Activated B cell treated with CpG ODN at 0.5 μM for 24 hours (primary cell): ENCODE measurements at regions of chr12 and their contacts with region 1.

Region 1: DNA sequence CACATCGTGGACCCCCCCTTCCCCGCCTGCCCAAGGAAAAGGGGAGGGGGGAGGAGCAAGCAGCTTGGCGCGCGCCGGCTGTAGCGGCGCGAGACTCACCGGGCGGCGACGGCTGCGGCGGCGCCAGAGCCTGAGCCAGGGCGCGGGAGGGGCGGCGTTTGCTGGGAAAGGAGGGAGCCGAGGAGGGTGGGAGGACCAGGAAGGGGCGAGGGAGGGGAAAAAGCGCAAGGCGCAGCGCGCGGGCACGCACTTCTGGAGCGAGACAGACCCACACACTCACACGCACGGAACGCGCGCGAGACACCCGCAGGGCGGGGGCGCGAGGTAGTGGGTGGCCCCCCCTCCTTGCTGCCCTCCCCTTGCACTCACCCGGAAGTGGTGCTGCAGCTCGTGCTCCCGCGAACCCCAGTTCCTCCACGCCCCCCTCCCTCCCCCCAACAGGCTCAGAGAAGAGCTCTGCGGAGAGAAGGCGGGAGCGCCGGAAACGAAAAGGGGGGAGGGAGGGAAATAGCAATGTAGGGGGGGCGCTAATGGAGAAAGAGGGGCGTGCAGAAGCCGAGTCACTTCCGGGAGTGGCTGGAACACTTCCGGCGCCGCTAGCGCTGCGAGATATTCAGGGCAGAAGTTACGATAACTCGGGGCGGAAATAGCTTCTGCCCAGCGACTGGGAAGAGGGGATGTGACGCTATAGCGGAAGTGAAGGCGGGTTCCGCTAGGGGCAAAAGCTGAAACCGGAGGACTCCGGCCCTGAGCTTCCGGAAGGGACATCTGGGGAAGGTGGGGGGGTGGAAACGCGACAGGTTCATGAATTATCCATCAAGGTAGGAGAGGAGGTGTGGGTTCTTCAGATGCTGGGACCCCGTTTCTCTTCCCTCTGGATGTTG is at the start of gene ZNF384:
- DNase-seq: peak; percentile 84
- ATAC-seq: peak; percentile 77
- H3K4me3 Mint-ChIP-seq: peak within 1 kb of the TSS; percentile 94
- H3K27ac Mint-ChIP-seq: peak within 1 kb of the TSS; percentile 96
- H3K4me1 Mint-ChIP-seq: peaks cover 52% of the 10 kb centered on the region
- H3K27me3 Mint-ChIP-seq: no peaks in the 10 kb centered on the region
- CTCF ChIP-seq: no peak
- total RNA-seq, gene ZNF384: 81.7 and 98.6 TPM in 2 replicates

Region 2: GRCh38 chr12:6493497-6494257 is 195.6 kb before region 1 on chr12 and contains the start of gene NCAPD2:
- CTCF ChIA-PET with region 1: no interaction called
- POLR2A ChIA-PET with region 1: interaction called, 26 read pairs
- intact Hi-C with region 1: loop called (anchors 1 kb)
- DNase-seq: peak; percentile 85
- ATAC-seq: peak; percentile 85
- H3K4me3 Mint-ChIP-seq: peak within 1 kb of the TSS; percentile 97
- H3K27ac Mint-ChIP-seq: peak within 1 kb of the TSS; percentile 96
- H3K4me1 Mint-ChIP-seq: peaks cover 28% of the 10 kb centered on the region
- H3K27me3 Mint-ChIP-seq: no peaks in the 10 kb centered on the region
- CTCF ChIP-seq: no peak
- total RNA-seq, gene NCAPD2: 38.4 and 40.9 TPM in 2 replicates

Region 3: DNA sequence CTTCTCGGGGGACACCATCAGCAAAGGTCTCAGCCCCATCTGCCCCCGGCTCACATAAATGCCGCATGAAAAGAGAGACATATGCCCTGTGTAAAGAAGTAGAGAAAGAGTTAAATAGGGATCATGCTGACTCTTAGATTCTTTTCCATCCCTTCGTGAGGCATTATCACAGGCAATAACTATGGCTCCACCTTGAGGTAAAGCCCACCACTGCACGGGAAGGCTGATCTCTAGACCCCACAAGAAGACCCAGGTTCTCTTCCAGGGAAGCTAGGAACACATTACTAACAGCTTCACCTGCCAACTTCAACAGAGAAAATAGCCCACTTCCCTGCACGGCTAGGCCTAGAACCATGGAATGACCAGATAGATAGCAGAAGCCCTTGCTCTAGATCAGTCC is 107.0 kb before region 1 on chr12:
- CTCF ChIA-PET with region 1: no interaction called
- POLR2A ChIA-PET with region 1: interaction called, 10 read pairs
- intact Hi-C with region 1: no loop called
- DNase-seq: no peak
- ATAC-seq: no peak
- H3K4me3 Mint-ChIP-seq: no peak overlapping the region
- H3K27ac Mint-ChIP-seq: no peak overlapping the region
- H3K4me1 Mint-ChIP-seq: no peaks in the 10 kb centered on the region
- H3K27me3 Mint-ChIP-seq: no peaks in the 10 kb centered on the region
- CTCF ChIP-seq: no peak

Region 4: DNA sequence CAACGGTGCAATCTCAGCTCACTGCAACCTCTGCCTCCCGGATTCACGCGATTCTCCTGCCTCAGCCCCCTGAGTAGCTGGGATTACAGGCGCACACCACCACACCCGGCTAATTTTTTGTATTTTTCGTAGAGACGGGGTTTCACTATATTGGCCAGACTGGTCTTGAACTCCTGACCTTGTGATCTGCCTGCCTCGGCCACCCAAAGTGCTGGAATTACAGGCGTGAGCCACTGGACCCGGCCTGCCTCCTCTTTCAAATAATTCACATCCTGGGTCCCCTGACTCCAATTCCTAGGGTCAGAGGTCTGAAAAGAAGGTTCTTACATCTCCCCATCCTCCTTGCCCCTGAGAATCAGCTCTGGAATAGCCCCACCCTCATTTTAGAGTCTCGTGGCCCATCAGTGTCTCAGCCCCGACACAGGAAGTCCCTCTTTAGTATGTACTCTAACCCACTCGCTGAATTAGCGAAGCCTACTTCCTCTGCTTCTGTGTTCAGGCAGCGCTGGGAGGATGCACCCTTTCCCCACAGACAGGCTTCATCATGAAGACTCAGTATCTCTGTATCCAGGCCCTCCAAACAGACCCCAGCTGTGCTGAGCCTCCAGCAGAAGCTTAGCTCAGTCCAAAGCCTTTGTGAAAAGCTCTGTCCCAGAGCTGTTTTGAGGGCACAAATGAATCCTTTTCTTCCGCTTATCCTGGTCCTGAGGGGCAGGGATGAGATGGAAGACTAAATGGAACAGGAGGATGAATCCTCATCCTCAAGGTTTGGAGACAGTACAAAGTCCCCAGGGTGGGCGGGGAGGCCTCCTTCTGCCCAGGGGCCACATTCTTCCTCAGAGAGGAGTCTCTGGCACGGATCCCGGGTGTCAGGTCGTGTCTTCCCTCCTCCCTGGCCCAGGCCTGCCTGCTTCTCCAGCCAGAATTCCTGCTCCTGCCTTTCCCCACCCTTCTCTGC is 56.9 kb before region 1 on chr12:
- CTCF ChIA-PET with region 1: interaction called, 8 read pairs
- POLR2A ChIA-PET with region 1: interaction called, 51 read pairs
- intact Hi-C with region 1: loop called (anchors 1 kb)
- DNase-seq: peak; percentile 51
- ATAC-seq: peak; percentile 53
- H3K4me3 Mint-ChIP-seq: peak overlapping the region; percentile 86
- H3K27ac Mint-ChIP-seq: peak overlapping the region; percentile 98
- H3K4me1 Mint-ChIP-seq: peaks cover 84% of the 10 kb centered on the region
- H3K27me3 Mint-ChIP-seq: no peaks in the 10 kb centered on the region
- CTCF ChIP-seq: no peak

Region 5: DNA sequence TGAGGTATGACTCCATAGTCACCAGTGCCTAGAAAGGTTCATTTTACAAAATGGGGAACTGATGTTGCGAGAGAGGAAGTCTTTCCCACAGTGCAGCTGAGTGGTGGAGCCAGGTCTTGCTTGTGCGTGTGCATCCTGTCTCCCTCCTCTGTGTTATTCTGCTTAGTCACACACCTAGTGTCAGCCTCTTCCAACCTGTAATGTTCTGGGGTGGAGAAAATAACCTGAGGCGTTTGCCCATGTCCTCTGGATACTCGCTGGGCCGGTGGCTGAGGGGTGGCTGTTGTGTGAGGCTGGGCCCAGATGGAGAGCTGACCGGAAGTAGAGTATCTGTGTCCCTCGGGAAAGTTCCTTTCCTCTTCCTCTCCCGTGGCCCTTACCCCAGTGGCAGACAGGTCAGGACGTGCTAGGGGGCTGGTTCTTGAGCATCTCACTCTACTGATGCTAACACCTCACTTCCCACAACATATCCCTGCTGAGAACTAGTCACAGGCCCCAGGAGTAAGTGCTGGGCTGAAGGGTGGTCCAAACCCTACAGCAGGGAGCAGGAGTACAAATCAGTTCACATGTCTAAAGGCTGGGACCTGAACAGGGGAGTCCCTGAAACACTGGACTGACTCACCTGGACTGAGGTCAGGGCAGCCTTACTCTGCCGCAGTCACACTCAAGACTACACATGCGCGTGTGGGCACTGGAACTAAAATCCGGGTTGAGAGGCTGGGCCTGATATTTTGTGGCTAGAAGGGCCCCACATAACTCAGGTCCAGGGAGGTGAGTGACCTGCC is 56.7 kb after region 1 on chr12:
- CTCF ChIA-PET with region 1: no interaction called
- POLR2A ChIA-PET with region 1: interaction called, 12 read pairs
- intact Hi-C with region 1: no loop called
- DNase-seq: peak; percentile 25
- ATAC-seq: peak; percentile 96
- H3K4me3 Mint-ChIP-seq: peak overlapping the region; percentile 53
- H3K27ac Mint-ChIP-seq: peak overlapping the region; percentile 95
- H3K4me1 Mint-ChIP-seq: peaks cover 23% of the 10 kb centered on the region
- H3K27me3 Mint-ChIP-seq: no peaks in the 10 kb centered on the region
- CTCF ChIP-seq: no peak

Region 6: DNA sequence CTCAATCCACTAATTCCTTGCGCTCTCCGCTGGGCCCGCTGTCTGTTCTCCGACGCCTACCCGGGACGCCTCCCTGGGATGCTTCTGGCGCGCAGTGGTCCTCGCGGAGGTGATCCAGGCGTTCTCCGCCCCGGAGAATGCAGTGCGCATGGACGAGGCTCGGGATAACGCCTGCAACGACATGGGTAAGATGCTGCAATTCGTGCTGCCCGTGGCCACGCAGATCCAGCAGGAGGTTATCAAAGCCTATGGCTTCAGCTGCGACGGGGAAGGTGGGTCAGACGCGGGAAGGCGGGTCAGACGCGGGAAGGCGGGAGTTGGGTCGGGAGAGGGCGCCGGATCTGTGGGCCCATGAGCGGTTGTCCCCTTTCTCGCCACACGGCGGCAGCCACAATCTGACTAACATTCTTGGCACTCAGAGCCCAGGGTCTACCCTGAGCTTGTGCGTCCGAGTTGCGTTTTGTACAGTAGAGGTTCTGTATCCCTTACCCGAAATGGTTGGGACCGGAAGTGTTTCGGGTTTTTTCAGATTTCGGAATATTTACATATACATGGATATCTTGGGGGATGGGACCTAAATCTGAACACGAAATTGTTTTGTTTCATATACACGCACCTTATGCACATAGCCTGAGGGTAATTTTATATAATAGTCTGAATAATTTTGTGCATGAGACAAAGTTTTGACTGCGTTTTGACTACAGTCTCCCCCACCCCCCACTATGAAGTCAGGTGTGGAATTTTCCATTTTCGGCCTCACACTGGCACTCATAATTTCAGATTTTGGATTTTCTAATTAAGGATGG is 255.3 kb after region 1 on chr12:
- CTCF ChIA-PET with region 1: no interaction called
- POLR2A ChIA-PET with region 1: interaction called, 18 read pairs
- intact Hi-C with region 1: no loop called
- DNase-seq: peak; percentile 80
- ATAC-seq: peak; percentile 41
- H3K4me3 Mint-ChIP-seq: peak overlapping the region; percentile 91
- H3K27ac Mint-ChIP-seq: peak overlapping the region; percentile 96
- H3K4me1 Mint-ChIP-seq: peaks cover 72% of the 10 kb centered on the region
- H3K27me3 Mint-ChIP-seq: no peaks in the 10 kb centered on the region
- CTCF ChIP-seq: peak; percentile 59